ENCODE measurements at regions of chr6 and their contacts with region 1.

Region 1: GRCh38 chr6:122381497-122382265 is 17.8 kb upstream of the HSF2 start:
- DNase-seq: peak; percentile 79
- H3K4me3 Mint-ChIP-seq: no peak overlapping the region
- H3K27ac Mint-ChIP-seq: no peak overlapping the region
- H3K4me1 Mint-ChIP-seq: peaks cover 6% of the 10 kb centered on the region
- H3K27me3 Mint-ChIP-seq: peaks cover 3% of the 10 kb centered on the region

Region 2: DNA sequence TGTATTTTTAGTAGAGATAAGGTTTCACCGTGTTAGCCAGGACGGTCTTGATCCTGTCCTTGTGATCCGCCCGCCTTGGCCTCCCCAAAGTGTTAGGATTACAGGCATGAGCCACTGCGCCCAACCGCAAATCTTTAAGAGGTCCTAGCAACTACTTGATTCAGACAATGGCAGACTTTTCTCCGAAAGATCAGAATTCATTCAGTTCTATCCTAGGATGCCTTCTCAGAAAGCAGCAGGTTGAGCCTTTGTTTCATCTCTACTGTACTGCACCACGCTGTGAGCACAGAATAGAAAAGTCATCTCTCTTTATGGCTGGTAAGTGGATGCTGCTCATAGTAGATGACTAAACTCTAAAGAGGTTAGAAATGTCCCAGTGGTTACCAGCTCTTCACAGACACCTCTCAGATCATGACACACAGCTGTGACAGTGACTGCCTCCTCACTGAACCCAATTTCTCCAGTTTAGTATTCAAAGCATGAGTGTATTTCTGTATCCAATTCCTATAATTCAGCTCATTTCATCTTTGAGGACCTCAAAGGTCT is 11.7 kb after region 1 on chr6:
- CTCF ChIA-PET with region 1: interaction called, 13 read pairs
- intact Hi-C with region 1: loop called (anchors 1 kb)
- DNase-seq: peak; percentile 59
- H3K4me3 Mint-ChIP-seq: no peak overlapping the region
- H3K27ac Mint-ChIP-seq: peak overlapping the region; percentile 67
- H3K4me1 Mint-ChIP-seq: peaks cover 17% of the 10 kb centered on the region
- H3K27me3 Mint-ChIP-seq: no peaks in the 10 kb centered on the region

Region 3: GRCh38 chr6:122408702-122409458 is 27.2 kb after region 1 on chr6:
- CTCF ChIA-PET with region 1: interaction called, 4 read pairs
- intact Hi-C with region 1: loop called (anchors 1 kb)
- DNase-seq: no peak
- H3K4me3 Mint-ChIP-seq: peak overlapping the region; percentile 72
- H3K27ac Mint-ChIP-seq: peak overlapping the region; percentile 98
- H3K4me1 Mint-ChIP-seq: peaks cover 76% of the 10 kb centered on the region
- H3K27me3 Mint-ChIP-seq: no peaks in the 10 kb centered on the region

Region 4: GRCh38 chr6:122491919-122492555 is 110.4 kb after region 1 on chr6:
- CTCF ChIA-PET with region 1: interaction called, 10 read pairs
- intact Hi-C with region 1: loop called (anchors 1 kb)
- DNase-seq: peak; percentile 87
- H3K4me3 Mint-ChIP-seq: no peak overlapping the region
- H3K27ac Mint-ChIP-seq: no peak overlapping the region
- H3K4me1 Mint-ChIP-seq: peaks cover 10% of the 10 kb centered on the region
- H3K27me3 Mint-ChIP-seq: no peaks in the 10 kb centered on the region

Region 5: DNA sequence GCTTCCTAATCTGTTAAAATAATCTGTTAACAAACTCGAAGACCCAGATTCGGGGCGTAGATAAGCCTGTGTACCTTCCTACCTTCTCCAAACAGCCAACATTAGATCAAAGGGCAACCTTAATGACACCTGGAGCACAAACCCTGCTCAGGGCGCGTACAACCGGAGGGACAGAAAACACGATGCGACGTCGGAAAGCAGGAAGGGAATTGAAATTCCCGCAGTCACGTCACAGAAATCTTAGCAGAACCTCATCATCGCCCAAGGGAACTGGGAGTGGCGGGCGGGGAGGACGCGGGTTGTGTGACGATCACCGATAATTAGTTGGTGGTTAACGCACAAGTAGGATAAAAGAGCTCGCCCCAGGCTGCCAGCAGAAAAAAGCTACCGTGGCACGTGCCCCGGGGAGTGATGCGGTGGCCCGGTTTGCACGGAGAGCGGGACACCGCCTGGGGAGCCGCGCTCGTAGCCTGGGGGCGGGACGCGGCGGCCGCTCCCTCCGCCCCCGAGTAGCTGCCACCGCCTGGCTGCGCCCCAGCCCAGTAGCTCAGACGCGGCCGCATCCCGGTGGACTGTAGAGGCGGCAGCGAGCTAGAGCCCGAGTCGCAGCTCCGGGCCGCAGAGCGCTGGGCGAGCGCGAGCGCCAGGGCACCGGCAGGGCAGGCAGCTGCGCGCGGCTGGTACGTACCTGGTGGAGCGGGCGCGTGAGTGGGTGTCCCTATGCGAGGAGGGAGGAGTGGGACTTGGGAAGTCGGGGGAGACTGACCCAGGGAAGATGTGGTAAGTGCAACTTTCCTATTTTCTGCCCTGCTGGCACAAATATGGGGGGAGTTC is 228.4 kb after region 1 on chr6 and contains the start of gene PKIB:
- CTCF ChIA-PET with region 1: no interaction called
- intact Hi-C with region 1: loop called (anchors 5 kb)
- DNase-seq: peak; percentile 67
- H3K4me3 Mint-ChIP-seq: peak within 1 kb of the TSS; percentile 77
- H3K27ac Mint-ChIP-seq: no peak within 1 kb of the TSS
- H3K4me1 Mint-ChIP-seq: peaks cover 14% of the 10 kb centered on the region
- H3K27me3 Mint-ChIP-seq: peaks cover 30% of the 10 kb centered on the region
- total RNA-seq, gene PKIB: 0.67 TPM in 1 of 2 experiments, not detected in the other

Region 6: GRCh38 chr6:122839477-122839876 is 457.8 kb after region 1 on chr6:
- CTCF ChIA-PET with region 1: no interaction called
- intact Hi-C with region 1: loop called (anchors 5 kb)
- DNase-seq: peak; percentile 72
- H3K4me3 Mint-ChIP-seq: no peak overlapping the region
- H3K27ac Mint-ChIP-seq: no peak overlapping the region
- H3K4me1 Mint-ChIP-seq: no peaks in the 10 kb centered on the region
- H3K27me3 Mint-ChIP-seq: peaks cover 10% of the 10 kb centered on the region